ENCODE measurements at regions of chr5 and their contacts with region 1.

Region 1: DNA sequence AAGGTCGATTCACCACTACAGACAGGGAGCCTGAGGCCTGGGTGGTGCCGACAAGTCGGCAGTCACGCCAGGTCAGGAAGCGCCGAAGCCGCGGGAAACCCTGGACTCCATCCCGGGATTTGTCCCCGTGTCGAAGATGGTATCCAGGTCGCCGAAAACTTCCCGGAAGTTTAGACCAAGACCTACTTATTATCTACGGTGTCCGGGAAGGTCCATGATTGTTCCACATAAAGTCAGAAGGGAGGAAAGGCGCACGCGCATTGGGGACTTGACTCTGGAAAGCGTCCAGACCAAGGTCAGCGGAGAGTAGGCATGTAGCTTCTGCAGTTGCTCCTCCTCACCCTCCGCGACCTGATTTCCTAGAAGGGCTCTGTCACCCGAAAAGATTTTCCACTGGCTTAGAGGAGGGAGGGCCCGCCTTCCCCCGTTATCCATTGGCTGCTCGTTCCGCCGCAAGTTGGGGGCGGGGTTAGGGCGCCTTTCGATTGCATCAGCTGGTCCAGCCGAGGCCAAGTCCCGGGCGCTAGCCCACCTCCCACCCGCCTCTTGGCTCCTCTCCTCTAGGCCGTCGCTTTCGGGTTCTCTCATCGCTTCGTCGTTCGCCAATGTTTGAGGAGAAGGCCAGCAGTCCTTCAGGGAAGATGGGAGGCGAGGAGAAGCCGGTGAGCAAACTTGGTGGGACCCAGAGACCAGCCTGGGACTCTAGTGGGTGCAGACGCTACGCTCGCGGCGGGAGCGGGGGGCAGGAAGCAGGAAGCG is at the start of gene TARS1:
- DNase-seq: peak; percentile 99
- H3K4me3 ChIP-seq: peak within 1 kb of the TSS; percentile 47 to 65
- H3K27ac ChIP-seq: peak within 1 kb of the TSS; percentile 82 to 85
- H3K4me1 ChIP-seq: no peaks in the 10 kb centered on the region
- H3K27me3 ChIP-seq: no peaks in the 10 kb centered on the region
- CTCF ChIP-seq: no peak
- POLR2A ChIP-seq: peak; percentile 62
- total RNA-seq, gene TARS1: 27.4 to 65.9 TPM

Region 2: GRCh38 chr5:33257807-33258483 is 182.7 kb before region 1 on chr5:
- intact Hi-C with region 1: no loop called
- DNase-seq: no peak
- H3K4me3 ChIP-seq: no peak overlapping the region
- H3K27ac ChIP-seq: no peak overlapping the region
- H3K4me1 ChIP-seq: no peaks in the 10 kb centered on the region
- H3K27me3 ChIP-seq: no peaks in the 10 kb centered on the region
- CTCF ChIP-seq: peak in 1 of 4 experiments; percentile 9
- POLR2A ChIP-seq: no peak

Region 3: GRCh38 chr5:33969572-33970452 is 529.2 kb after region 1 on chr5:
- intact Hi-C with region 1: loop called (anchors 10 kb)
- DNase-seq: no peak
- H3K4me3 ChIP-seq: no peak overlapping the region
- H3K27ac ChIP-seq: no peak overlapping the region
- H3K4me1 ChIP-seq: no peaks in the 10 kb centered on the region
- H3K27me3 ChIP-seq: no peaks in the 10 kb centered on the region
- CTCF ChIP-seq: peak in 3 of 4 experiments; percentile 48 to 60 (median 59)
- POLR2A ChIP-seq: no peak

Region 4: GRCh38 chr5:34007621-34008600 is 567.2 kb after region 1 on chr5 and contains the start of gene AMACR:
- intact Hi-C with region 1: loop called (anchors 10 kb)
- DNase-seq: peak; percentile 87
- H3K4me3 ChIP-seq: peak within 1 kb of the TSS; percentile 68 to 69
- H3K27ac ChIP-seq: peak within 1 kb of the TSS; percentile 86 to 87
- H3K4me1 ChIP-seq: no peaks in the 10 kb centered on the region
- H3K27me3 ChIP-seq: no peaks in the 10 kb centered on the region
- CTCF ChIP-seq: no peak
- POLR2A ChIP-seq: no peak
- total RNA-seq, gene AMACR: 14.8 to 21.8 TPM

Region 5: DNA sequence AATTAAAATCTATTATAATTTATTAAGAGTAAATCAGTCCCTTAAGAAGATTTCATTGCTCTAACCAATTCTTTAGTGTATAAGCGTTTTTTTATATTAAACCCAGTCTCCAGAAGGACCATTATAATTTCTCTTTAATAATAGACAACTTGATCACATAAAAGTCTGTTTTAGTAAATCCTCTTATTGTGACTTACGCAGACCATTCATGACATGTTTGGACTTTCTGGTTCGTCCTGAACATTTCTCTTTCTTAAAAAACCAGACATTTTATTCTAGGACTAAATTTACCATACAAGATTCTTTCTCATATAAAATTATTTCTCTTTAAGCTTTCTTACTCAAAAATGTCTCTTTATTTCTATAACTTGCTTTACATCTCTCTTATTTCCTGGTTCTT is 1019.2 kb after region 1 on chr5:
- intact Hi-C with region 1: loop called (anchors 10 kb)
- DNase-seq: no peak
- H3K4me3 ChIP-seq: no peak overlapping the region
- H3K27ac ChIP-seq: no peak overlapping the region
- H3K4me1 ChIP-seq: no peaks in the 10 kb centered on the region
- H3K27me3 ChIP-seq: no peaks in the 10 kb centered on the region
- CTCF ChIP-seq: no peak
- POLR2A ChIP-seq: no peak

Region 6: DNA sequence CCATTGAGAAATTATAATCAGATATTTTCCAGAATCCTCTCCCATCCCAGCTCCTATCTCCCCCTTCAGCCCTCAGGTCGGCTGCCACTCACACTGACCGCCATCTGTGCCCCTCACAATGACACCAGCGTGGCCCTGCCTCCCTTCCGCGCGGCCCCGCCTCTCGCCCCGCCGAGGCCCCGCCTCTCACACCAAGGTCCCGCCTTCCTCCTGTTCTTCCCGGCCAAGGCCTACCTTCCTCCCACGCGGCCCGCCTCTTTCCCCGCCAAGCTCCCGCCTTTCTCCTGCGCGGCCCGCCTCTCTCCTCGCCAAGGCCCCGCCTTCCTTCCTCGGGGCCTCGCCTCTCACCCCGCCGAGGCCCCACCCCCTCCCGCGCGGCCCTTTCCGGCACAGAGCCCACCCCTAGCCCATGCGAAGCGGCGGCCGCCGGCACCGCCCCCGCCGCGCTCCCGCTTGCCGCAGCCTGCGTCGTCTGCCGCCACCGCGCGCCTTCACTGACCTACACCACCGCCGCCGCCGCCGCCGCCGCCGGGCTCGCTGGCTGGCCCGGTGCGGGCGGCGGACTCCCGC is 1488.6 kb after region 1 on chr5 and contains the start of gene DNAJC21:
- intact Hi-C with region 1: loop called (anchors 10 kb)
- DNase-seq: peak; percentile 96
- H3K4me3 ChIP-seq: peak within 1 kb of the TSS; percentile 81 to 82
- H3K27ac ChIP-seq: peak within 1 kb of the TSS; percentile 91 to 92
- H3K4me1 ChIP-seq: peaks cover 10% of the 10 kb centered on the region
- H3K27me3 ChIP-seq: no peaks in the 10 kb centered on the region
- CTCF ChIP-seq: no peak
- POLR2A ChIP-seq: no peak
- total RNA-seq, gene DNAJC21: 30.6 to 36.5 TPM